ENCODE measurements at regions of chr6 and their contacts with region 1.

Region 1: GRCh38 chr6:47631269-47631772 is 67.1 kb upstream of the ADGRF4 start:
- DNase-seq: no peak
- ATAC-seq: peak; percentile 68 to 90 (median 76)
- H3K4me3 ChIP-seq: no peak overlapping the region
- H3K27ac ChIP-seq: no peak overlapping the region
- H3K4me1 ChIP-seq: no peaks in the 10 kb centered on the region
- H3K27me3 ChIP-seq: no peaks in the 10 kb centered on the region
- CTCF ChIP-seq: peak; percentile 75

Region 2: DNA sequence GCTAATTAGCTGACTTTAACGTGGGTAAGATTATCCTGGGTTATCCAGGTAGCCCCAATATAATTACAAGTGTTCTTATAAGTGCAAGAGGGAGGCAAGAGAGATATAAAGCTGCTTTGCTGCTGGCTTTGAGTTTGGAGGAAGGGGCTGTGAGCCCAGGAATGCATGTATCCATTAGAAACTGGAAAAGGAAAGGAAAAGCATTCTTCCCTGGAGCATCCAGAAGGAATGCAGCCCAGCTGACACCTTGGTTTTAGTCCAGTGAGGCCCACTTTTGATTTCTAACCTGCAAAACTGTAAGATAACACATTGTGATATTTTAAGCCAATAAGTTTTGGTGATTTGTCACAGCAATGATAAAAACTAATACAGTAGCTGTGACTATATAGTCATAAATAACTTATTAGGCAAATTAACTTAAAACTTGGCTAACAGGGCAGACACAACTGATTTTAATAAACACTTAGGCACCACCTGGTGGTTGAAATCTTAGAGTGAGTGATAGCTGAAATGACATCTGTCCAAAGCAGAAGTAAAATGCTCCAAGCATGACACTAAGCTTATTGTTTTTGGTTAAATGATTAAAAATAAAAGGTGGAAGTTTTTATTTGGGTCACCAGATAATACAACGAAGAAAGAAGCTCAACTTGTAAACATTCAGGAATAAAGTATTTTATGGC is 102.7 kb after region 1 on chr6:
- intact Hi-C with region 1: loop called (anchors 5 kb)
- DNase-seq: no peak
- ATAC-seq: peak in 3 of 4 donors; percentile 41 to 70 (median 46)
- H3K4me3 ChIP-seq: no peak overlapping the region
- H3K27ac ChIP-seq: no peak overlapping the region
- H3K4me1 ChIP-seq: peaks cover 2% of the 10 kb centered on the region
- H3K27me3 ChIP-seq: no peaks in the 10 kb centered on the region
- CTCF ChIP-seq: peak; percentile 47

Region 3: DNA sequence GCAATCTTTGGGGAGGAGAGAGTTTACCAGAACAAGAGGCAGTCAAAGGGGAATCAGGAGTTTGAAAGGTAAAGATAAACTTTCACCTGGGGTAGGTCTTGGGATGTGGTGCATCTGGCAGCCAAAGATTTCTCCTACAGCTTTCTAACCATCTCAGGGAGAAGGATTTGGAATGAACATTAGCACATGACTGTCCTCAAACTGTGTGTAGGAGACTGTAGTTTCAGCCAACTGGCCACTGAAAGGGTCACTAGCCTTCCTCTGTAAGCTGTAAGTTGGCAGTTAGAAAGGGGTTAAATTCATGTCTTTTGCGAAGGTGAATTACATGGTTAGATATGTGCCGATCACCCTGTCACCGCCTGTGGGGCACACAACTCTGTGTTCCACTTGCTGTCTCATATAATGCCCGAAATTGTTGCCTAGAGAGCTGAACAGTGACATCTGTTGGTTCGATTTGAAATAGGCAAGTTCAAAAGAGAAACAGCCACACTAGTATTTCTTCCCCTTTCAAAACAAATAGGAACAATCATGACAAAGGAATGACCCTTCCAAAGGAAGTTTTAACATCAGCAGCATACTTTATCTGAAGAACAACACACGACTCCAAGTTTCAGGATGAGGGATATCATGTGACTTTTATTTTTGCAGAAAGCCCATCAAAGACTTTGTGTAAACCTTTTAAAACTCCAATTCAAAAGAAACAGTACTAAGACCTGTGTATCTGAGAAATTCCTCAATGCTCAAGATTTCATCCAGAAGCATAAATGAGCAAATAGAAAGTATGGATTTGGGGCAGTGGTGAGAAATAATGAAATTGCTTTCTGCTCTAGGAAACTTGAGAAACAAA is 149.4 kb after region 1 on chr6:
- intact Hi-C with region 1: loop called (anchors 1 to 2 kb)
- DNase-seq: no peak
- ATAC-seq: peak; percentile 68 to 92 (median 86)
- H3K4me3 ChIP-seq: peak overlapping the region; percentile 4
- H3K27ac ChIP-seq: no peak overlapping the region
- H3K4me1 ChIP-seq: no peaks in the 10 kb centered on the region
- H3K27me3 ChIP-seq: no peaks in the 10 kb centered on the region
- CTCF ChIP-seq: peak; percentile 66

Measured in psoas muscle (tissue), 8 donors.